ENCODE measurements at regions of chr5 and their contacts with region 1.

Region 1: DNA sequence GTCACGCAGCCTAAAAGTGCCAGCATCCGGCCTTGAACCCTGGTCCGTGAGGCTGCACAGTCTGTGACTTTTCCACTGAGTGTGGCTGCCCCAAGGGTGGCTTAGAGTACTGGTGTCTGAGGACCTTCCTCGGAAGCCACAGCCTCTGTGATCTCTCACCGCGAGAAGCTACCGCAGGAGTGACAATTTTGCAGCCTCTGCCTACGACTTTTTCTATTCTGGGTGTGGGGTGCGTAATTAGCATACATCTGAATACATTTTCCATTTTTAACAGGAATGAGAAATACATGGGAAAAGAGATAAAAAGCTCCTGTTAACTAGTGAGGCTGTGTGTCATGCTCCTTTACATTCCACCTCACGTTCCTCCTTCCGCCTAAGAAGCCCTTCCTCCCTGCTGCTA is 48.3 kb upstream of the HRH2 start:
- DNase-seq: no peak

Region 2: GRCh38 chr5:175567954-175568353 is 41.6 kb before region 1 on chr5:
- intact Hi-C with region 1: no loop called
- DNase-seq: no peak

Region 3: DNA sequence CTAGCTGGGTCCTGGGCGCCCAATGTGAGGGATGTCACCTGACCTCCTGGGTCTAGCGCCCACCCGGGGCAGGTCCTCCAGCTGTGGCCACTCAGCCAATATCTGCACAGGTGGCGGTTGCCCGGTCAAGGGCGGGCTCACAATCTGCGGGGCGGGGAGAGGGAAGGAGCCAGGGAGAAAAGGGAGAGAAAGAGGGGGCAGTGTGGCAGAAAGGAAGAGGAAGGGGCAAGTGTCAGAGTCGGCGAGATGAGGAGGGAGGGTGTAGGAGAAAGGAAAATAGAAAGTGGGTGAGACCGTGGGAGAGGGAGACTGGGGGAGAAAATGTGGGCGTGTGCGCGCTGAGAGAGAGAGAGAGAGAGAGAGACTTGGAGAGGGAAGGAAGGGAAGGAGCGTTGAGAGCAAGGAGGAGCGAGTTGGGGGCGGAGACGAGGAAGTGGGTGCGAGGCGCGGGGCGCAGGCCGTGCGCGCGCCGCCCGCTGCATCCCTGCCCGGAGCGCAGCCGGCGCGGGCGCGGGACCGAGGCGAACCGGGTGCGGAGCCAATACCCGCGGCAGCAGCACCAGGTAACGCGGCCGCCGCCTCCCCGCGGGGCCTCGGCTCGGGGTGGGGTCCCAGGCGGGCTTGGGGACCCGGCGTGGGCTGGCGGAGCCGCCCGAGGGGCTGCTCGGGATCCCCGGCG is 48.2 kb after region 1 on chr5 and contains the start of gene HRH2:
- intact Hi-C with region 1: loop called (anchors 5 kb)
- DNase-seq: peak; percentile 89
- total RNA-seq, gene HRH2: 60.1 TPM

Region 4: GRCh38 chr5:175718401-175719108 is 109.0 kb after region 1 on chr5:
- intact Hi-C with region 1: loop called (anchors 10 kb)
- DNase-seq: peak; percentile 74

Region 5: GRCh38 chr5:175778951-175779538 is 169.5 kb after region 1 on chr5:
- intact Hi-C with region 1: no loop called
- DNase-seq: no peak